OCI-LY7 (cell line): ENCODE measurements at regions of chr2 and their contacts with region 1.

Region 1: GRCh38 chr2:68774569-68775271 is 40.1 kb downstream of the ARHGAP25 start:
- DNase-seq: peak; percentile 87
- H3K4me3 ChIP-seq: peak overlapping the region; percentile 69
- H3K27ac ChIP-seq: peak overlapping the region; percentile 54
- H3K4me1 ChIP-seq: peaks cover 81% of the 10 kb centered on the region
- CTCF ChIP-seq: no peak

Region 2: GRCh38 chr2:68715353-68716041 is 59.2 kb before region 1 on chr2:
- CTCF ChIA-PET with region 1: no interaction called
- POLR2A ChIA-PET with region 1: interaction called, 3 read pairs
- intact Hi-C with region 1: loop called (anchors 2 kb)
- DNase-seq: peak; percentile 87
- H3K4me3 ChIP-seq: peak overlapping the region; percentile 51
- H3K27ac ChIP-seq: peak overlapping the region; percentile 68
- H3K4me1 ChIP-seq: peaks cover 31% of the 10 kb centered on the region
- CTCF ChIP-seq: peak; percentile 90

Region 3: DNA sequence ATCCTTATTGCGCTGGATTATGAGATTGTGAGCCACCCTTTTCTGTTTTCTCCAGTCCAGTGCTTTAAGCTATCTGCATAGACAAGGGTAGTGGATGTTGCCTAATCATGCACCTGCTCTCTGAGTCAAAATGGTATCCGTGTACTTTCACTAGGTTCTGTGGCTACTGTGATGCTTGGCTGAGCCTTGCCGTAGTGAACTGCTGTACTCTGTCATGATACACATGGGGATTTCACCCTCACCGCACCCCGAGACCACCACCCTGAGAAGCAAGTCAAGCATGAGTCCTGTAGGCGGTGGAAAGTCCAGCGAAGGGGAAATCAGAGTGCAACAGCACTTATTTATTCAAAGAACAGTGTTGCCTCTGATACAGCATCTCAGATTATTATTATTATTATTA is 14.9 kb after region 1 on chr2:
- CTCF ChIA-PET with region 1: interaction called, 10 read pairs
- POLR2A ChIA-PET with region 1: interaction called, 64 read pairs
- intact Hi-C with region 1: no loop called
- DNase-seq: peak; percentile 93
- H3K4me3 ChIP-seq: peak overlapping the region; percentile 3
- H3K27ac ChIP-seq: peak overlapping the region; percentile 76
- H3K4me1 ChIP-seq: peaks cover 55% of the 10 kb centered on the region
- CTCF ChIP-seq: no peak

Region 4: GRCh38 chr2:68837164-68837860 is 62.6 kb after region 1 on chr2:
- CTCF ChIA-PET with region 1: no interaction called
- POLR2A ChIA-PET with region 1: interaction called, 6 read pairs
- intact Hi-C with region 1: loop called (anchors 2 kb)
- DNase-seq: peak; percentile 85
- H3K4me3 ChIP-seq: no peak overlapping the region
- H3K27ac ChIP-seq: no peak overlapping the region
- H3K4me1 ChIP-seq: peaks cover 50% of the 10 kb centered on the region
- CTCF ChIP-seq: peak; percentile 97